Adrenal gland (tissue), 19 donors: ENCODE measurements at regions of chr3 and their contacts with region 1.

Region 1: GRCh38 chr3:119098619-119099222 is 47.2 kb upstream of the TEX55 start:
- DNase-seq: peak in 2 of 7 donors; percentile 19 to 28
- H3K4me3 ChIP-seq: no peak overlapping the region
- H3K27ac ChIP-seq: no peak overlapping the region
- H3K4me1 ChIP-seq: no peaks in the 10 kb centered on the region
- H3K27me3 ChIP-seq: no peaks in the 10 kb centered on the region
- CTCF ChIP-seq: peak; percentile 52 to 79 (median 73)
- POLR2A ChIP-seq: no peak

Region 2: GRCh38 chr3:118671192-118671591 is 427.5 kb before region 1 on chr3:
- intact Hi-C with region 1: no loop called
- DNase-seq: no peak
- H3K4me3 ChIP-seq: no peak overlapping the region
- H3K27ac ChIP-seq: no peak overlapping the region
- H3K4me1 ChIP-seq: no peaks in the 10 kb centered on the region
- H3K27me3 ChIP-seq: no peaks in the 10 kb centered on the region
- CTCF ChIP-seq: no peak
- POLR2A ChIP-seq: no peak

Region 3: DNA sequence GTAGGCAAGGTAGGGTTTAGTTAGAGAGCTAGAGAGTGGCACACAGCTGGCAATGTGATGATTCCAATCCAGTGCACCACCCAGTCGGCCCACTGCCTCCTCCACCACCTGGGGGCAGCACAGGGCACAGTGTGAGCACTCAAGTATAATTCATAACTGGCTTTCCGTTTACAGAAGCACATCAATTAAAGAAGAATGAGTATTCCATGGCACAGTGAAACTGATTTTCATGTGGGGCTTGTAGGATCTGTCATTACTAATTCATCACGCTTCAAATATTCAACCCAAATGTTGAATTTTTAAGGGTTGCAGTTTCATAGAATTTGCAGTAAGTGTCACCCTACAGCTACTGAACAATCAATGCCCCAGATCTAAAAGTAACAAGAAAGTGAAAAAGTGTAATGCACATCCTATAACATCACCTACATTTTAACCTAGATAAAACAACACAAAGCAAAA is 213.9 kb before region 1 on chr3:
- intact Hi-C with region 1: loop called (anchors 2 to 5 kb)
- DNase-seq: peak; percentile 63 to 91 (median 83)
- H3K4me3 ChIP-seq: no peak overlapping the region
- H3K27ac ChIP-seq: no peak overlapping the region
- H3K4me1 ChIP-seq: no peaks in the 10 kb centered on the region
- H3K27me3 ChIP-seq: no peaks in the 10 kb centered on the region
- CTCF ChIP-seq: peak; percentile 81 to 95 (median 90)
- POLR2A ChIP-seq: no peak

Region 4: GRCh38 chr3:118987477-118987876 is 111.2 kb before region 1 on chr3:
- intact Hi-C with region 1: no loop called
- DNase-seq: peak; percentile 91 to 97 (median 94)
- H3K4me3 ChIP-seq: no peak overlapping the region
- H3K27ac ChIP-seq: peak overlapping the region; percentile 14 to 74 (median 35)
- H3K4me1 ChIP-seq: peaks cover 35 to 50% of the 10 kb centered on the region in 2 donors
- H3K27me3 ChIP-seq: no peaks in the 10 kb centered on the region
- CTCF ChIP-seq: no peak
- POLR2A ChIP-seq: peak in 1 of 2 donors; percentile 47

Region 5: GRCh38 chr3:120393243-120393642 is 1294.5 kb after region 1 on chr3:
- intact Hi-C with region 1: no loop called
- DNase-seq: no peak
- H3K4me3 ChIP-seq: no peak overlapping the region
- H3K27ac ChIP-seq: no peak overlapping the region
- H3K4me1 ChIP-seq: no peaks in the 10 kb centered on the region
- H3K27me3 ChIP-seq: no peaks in the 10 kb centered on the region
- CTCF ChIP-seq: no peak
- POLR2A ChIP-seq: no peak